ENCODE measurements at regions of chr17 and their contacts with region 1.

Region 1: DNA sequence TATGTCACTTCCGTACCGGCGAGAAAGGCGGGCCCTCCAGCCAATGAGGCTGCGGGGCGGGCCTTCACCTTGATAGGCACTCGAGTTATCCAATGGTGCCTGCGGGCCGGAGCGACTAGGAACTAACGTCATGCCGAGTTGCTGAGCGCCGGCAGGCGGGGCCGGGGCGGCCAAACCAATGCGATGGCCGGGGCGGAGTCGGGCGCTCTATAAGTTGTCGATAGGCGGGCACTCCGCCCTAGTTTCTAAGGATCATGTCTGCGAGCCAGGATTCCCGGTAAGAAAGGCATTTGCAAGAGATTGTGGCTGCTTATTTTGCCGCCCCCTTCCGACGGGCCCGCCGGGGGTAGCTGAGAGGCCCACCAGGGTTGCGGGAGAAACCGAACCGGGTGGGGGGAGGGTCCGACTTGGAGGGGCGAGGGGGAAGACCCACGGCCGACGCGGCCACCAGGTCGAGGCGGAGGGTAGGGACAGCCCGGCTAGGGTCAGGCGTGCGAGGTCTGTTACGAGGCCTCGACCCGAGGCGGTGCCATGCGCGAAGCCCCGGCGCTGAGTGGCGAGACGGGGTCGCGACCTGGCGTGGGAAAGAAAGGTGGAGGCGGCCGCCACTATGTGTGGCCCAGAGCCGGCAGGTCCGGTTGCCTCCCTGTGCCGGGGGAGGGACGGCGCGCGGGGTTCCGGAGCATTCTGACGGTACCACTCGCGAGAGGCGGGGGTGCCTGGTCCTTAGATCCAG is 6.7 kb upstream of the CD68 start:
- DNase-seq: peak; percentile 99
- H3K4me3 ChIP-seq: peak overlapping the region; percentile 99
- H3K27ac ChIP-seq: peak overlapping the region; percentile 94
- H3K4me1 ChIP-seq: peaks cover 49% of the 10 kb centered on the region
- CTCF ChIP-seq: no peak

Region 2: DNA sequence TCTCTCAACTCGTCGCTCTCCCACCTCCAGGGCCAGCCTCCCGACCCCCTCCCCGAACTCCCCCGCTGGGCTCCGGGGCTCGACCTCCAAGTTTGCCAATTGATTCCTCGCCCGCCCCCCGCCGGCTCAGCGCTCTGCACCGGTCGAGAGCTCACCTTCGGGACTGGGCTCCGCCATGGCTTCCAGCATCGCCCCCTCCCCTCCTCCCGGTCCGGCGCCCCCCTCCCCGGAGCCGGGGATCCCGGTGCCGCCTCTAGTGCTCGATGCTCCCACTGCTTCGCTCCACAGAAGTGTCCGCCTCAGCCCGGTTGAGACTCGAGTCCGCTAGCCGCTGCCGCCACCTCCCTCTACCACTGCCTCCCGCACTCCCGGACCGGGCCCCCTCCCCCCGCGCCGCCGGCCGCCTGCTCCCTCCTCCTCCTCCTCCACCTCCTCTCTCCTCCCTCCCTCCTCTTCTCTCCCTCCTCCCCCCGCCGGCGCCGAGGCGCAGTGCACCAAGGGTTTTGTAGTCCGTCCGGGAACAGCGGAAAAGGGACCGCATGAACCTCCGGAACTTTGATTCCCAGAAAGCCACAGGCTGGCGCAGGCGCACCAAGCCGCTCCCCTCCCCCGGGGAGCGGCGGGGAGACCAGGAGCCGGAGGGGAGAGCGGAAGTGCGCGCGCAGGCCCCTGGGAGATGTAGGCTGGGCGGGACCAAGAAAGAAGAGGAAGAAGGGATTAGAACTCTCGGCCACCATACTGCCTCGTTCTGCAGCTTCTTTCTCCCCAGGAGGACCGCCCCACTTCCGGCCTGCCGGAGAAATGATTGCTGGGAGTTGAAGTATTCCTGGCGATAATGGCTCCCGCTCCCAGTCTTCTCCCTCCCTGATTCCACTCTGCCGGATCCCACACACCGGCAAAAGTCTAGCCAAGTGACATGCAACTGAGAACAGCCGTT is 333.4 kb before region 1 on chr17 and contains the start of gene PHF23:
- CTCF ChIA-PET with region 1: no interaction called
- POLR2A ChIA-PET with region 1: no interaction called
- intact Hi-C with region 1: loop called (anchors 5 kb)
- DNase-seq: peak; percentile 99
- H3K4me3 ChIP-seq: peak within 1 kb of the TSS; percentile 100
- H3K27ac ChIP-seq: peak within 1 kb of the TSS; percentile 86
- H3K4me1 ChIP-seq: peaks cover 60% of the 10 kb centered on the region
- CTCF ChIP-seq: 0 out of 2 replicates have a peak, but pooled peaks have one; percentile 9
- total RNA-seq, gene PHF23: 47.7 and 50.8 TPM in 2 replicates

Region 3: DNA sequence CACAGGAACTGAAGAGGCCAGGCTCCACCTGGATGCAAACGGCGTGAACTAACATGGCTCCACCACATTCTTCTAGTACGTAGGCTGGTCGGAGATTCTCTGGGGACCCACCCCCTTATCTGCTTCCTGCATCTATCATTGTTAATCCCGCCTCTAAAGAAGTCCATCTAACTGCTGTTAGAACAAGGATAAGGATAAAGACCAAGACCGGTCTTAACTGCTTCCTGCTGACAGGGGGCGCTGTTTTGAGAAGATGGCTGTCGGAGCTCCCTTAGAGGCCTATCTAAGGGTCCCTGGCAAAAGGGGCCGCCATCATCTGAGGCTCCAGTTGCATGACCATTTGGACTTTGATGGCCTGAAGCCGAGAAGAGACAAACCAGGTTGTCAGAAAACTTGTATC is 49.7 kb before region 1 on chr17:
- CTCF ChIA-PET with region 1: no interaction called
- POLR2A ChIA-PET with region 1: no interaction called
- intact Hi-C with region 1: no loop called
- DNase-seq: peak; percentile 20
- H3K4me3 ChIP-seq: no peak overlapping the region
- H3K27ac ChIP-seq: no peak overlapping the region
- H3K4me1 ChIP-seq: no peaks in the 10 kb centered on the region
- CTCF ChIP-seq: peak; percentile 75

Region 4: DNA sequence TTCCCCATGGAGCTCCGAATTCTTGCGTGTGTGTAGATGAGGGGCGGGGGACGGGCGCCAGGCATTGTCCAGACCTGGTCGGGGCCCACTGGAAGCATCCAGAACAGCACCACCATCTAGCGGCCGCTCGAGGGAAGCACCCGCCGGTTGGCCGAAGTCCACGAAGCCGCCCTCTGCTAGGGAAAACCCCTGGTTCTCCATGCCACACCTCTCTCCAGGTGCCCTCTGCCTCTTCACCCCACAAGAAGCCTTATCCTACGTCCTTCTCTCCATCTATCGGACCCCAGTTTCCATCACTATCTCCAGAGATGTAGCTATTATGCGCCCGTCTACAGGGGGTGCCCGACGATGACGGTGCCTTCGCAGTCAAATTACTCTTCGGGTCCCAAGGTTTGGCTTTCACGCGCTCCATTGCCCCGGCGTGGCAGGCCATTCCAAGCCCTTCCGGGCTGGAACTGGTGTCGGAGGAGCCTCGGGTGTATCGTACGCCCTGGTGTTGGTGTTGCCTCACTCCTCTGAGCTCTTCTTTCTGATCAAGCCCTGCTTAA is 11.7 kb before region 1 on chr17:
- CTCF ChIA-PET with region 1: no interaction called
- POLR2A ChIA-PET with region 1: interaction called, 3 read pairs
- intact Hi-C with region 1: loop called (anchors 1 kb)
- DNase-seq: peak; percentile 88
- H3K4me3 ChIP-seq: peak overlapping the region; percentile 94
- H3K27ac ChIP-seq: peak overlapping the region; percentile 80
- H3K4me1 ChIP-seq: peaks cover 47% of the 10 kb centered on the region
- CTCF ChIP-seq: peak; percentile 74

Region 5: DNA sequence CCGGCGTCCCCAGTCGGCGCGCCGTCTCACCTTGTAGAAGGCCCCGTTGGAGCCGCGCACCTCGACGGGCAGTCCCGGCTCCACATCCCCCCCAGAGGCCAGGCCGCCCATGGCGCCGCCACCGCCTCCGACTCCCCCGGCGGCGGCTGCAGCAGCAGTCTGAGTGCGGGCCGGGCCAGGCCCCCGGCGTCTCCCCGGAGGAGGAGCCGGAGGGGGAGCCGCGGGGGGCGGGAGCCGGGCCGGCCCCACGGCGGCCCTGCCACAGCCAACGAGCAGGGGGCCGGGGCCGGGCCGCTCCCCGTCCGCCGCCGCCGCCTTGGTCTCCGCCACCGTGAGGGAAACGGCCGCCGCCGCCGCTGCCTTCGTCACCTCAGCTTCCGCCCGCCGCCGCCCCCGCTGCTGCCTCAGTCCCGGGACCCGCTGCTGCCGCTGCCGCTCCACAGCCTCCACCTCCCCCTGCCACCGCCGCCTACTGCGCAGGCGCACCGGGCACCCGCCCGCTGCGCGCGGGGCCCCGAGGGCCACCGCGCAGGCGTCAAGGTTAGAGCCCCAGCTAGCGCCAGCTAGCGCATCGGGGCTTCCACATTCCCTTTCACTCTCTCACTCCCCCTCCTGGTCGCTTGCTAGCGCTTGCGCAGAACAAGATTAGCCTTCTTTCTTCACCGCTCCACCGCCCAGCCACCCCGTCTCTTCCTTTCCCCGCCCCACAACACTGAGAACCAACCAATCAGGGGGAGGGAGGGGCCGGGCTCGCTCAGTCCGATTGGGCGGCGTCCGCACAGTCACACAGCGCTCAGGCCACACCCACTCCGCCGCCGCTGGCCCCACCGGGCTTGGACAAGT is 41.9 kb after region 1 on chr17 and contains the start of gene FXR2:
- CTCF ChIA-PET with region 1: no interaction called
- POLR2A ChIA-PET with region 1: interaction called, 3 read pairs
- intact Hi-C with region 1: loop called (anchors 1 kb)
- DNase-seq: peak; percentile 99
- H3K4me3 ChIP-seq: peak within 1 kb of the TSS; percentile 87
- H3K27ac ChIP-seq: peak within 1 kb of the TSS; percentile 59
- H3K4me1 ChIP-seq: peaks cover 20% of the 10 kb centered on the region
- CTCF ChIP-seq: peak; percentile 69
- total RNA-seq, gene FXR2: 24.6 and 32.4 TPM in 2 replicates

Region 6: GRCh38 chr17:7740481-7741001 is 167.8 kb after region 1 on chr17:
- CTCF ChIA-PET with region 1: no interaction called
- POLR2A ChIA-PET with region 1: no interaction called
- intact Hi-C with region 1: no loop called
- DNase-seq: no peak
- H3K4me3 ChIP-seq: no peak overlapping the region
- H3K27ac ChIP-seq: no peak overlapping the region
- H3K4me1 ChIP-seq: no peaks in the 10 kb centered on the region
- CTCF ChIP-seq: no peak

Measured in OCI-LY7 (cell line).